H1 (cell line): ENCODE measurements at regions of chr12 and their contacts with region 1.

Region 1: GRCh38 chr12:107992870-107993451 is 136.1 kb upstream of the WSCD2 start:
- DNase-seq: peak; percentile 36 to 60
- H3K4me3 ChIP-seq: no peak overlapping the region
- H3K27ac ChIP-seq: no peak overlapping the region
- H3K4me1 ChIP-seq: no peaks in the 10 kb centered on the region
- H3K27me3 ChIP-seq: no peaks in the 10 kb centered on the region; a peak in 1 of 7 replicates
- CTCF ChIP-seq: peak; percentile 26 to 86 (median 82)
- EP300 ChIP-seq: no peak
- POLR2A ChIP-seq: no peak
- RAD21 ChIP-seq: peak; percentile 71 to 72

Region 2: GRCh38 chr12:107929436-107929835 is 63.5 kb before region 1 on chr12:
- CTCF ChIA-PET with region 1: interaction called, 24 read pairs
- POLR2A ChIA-PET with region 1: no interaction called
- DNase-seq: no peak
- H3K4me3 ChIP-seq: no peak overlapping the region
- H3K27ac ChIP-seq: no peak overlapping the region
- H3K4me1 ChIP-seq: no peaks in the 10 kb centered on the region
- H3K27me3 ChIP-seq: no peaks in the 10 kb centered on the region
- CTCF ChIP-seq: peak in 2 of 3 experiments; percentile 54 to 67; a peak in 3 of 4 replicates
- EP300 ChIP-seq: no peak
- POLR2A ChIP-seq: no peak
- RAD21 ChIP-seq: peak; percentile 67 to 80

Region 3: GRCh38 chr12:108004319-108004718 is 11.4 kb after region 1 on chr12:
- CTCF ChIA-PET with region 1: interaction called, 56 read pairs
- POLR2A ChIA-PET with region 1: no interaction called
- DNase-seq: no peak
- H3K4me3 ChIP-seq: no peak overlapping the region
- H3K27ac ChIP-seq: no peak overlapping the region
- H3K4me1 ChIP-seq: peaks cover 0 to 3% (median 0%) of the 10 kb centered on the region in 4 experiments; a peak in 1 of 7 replicates
- H3K27me3 ChIP-seq: peaks cover 0 to 2% (median 0%) of the 10 kb centered on the region in 4 experiments; a peak in 2 of 7 replicates
- CTCF ChIP-seq: no peak
- EP300 ChIP-seq: no peak
- POLR2A ChIP-seq: no peak
- RAD21 ChIP-seq: no peak

Region 4: DNA sequence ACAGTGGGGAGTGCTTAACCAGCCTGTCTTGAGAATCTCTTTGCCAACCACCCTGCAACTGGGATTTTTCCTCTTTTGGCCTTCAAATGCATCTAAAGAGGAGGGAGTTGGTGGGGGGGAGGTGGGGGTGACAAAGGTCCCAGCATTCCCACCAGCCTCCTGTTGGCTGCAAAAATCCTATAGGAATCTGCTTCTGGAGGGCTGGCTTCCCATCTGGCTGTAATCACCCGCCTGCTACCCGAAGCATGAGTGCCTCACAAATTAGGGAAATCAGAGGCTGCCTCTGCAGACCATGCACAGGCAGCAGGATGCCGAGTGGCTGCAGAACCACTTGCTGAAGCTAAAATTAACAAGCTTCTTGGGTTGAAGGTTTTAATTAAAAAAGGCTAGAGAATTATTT is 62.2 kb after region 1 on chr12:
- CTCF ChIA-PET with region 1: interaction called, 37 read pairs
- POLR2A ChIA-PET with region 1: no interaction called
- DNase-seq: no peak
- H3K4me3 ChIP-seq: no peak overlapping the region
- H3K27ac ChIP-seq: no peak overlapping the region
- H3K4me1 ChIP-seq: peaks cover 0 to 5% (median 2%) of the 10 kb centered on the region in 4 experiments; a peak in 3 of 7 replicates
- H3K27me3 ChIP-seq: no peaks in the 10 kb centered on the region; a peak in 1 of 7 replicates
- CTCF ChIP-seq: no peak
- EP300 ChIP-seq: no peak
- POLR2A ChIP-seq: no peak
- RAD21 ChIP-seq: no peak

Region 5: DNA sequence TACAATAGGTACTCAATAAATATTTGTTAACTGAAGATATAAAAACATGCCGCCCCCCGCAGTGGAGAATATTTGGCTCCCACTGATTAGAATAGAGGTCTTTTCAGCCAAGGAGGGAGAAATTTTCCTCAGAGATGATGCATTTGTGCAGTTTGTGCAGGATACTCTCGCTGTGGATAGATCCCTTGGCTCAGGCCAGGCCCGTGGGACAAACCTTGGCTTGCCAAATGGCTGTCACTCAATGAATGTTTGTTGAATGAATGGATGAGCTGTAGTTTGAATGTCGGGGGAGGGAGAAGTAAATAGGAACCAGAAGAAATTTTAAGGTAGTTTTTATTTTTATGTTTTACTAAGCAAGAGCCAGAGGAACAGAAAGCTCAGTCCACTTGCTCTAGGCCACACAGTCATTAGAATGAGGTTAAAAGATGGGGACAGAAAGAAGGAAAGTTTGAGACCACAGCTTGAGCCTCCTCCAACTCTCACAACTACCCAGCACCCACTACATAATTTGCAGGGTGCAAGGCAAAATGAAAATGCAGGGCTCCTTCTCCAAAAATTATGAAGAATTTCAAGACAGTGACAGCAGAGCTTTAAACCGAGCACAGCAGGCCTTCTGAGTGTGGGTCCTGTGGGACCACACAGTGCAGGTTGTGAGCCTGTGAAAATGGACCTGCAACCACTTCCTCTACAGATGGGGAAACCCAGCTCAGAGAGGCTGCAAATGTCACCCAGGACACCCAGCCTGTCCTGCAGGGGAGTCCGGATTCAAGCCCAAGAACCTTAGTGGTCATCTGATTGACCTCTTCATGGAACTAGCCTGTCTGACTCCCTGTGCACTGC is 187.5 kb after region 1 on chr12:
- CTCF ChIA-PET with region 1: interaction called, 10 read pairs
- POLR2A ChIA-PET with region 1: no interaction called
- DNase-seq: no peak
- H3K4me3 ChIP-seq: no peak overlapping the region
- H3K27ac ChIP-seq: no peak overlapping the region; the same call in 1 of the 2 replicates
- H3K4me1 ChIP-seq: peaks cover 0 to 4% (median under 1%) of the 10 kb centered on the region in 4 experiments; a peak in 3 of 7 replicates
- H3K27me3 ChIP-seq: no peaks in the 10 kb centered on the region
- CTCF ChIP-seq: no peak
- EP300 ChIP-seq: no peak
- POLR2A ChIP-seq: no peak
- RAD21 ChIP-seq: no peak

Region 6: GRCh38 chr12:108507971-108508642 is 515.1 kb after region 1 on chr12:
- CTCF ChIA-PET with region 1: interaction called, 41 read pairs
- POLR2A ChIA-PET with region 1: no interaction called
- DNase-seq: no peak
- H3K4me3 ChIP-seq: no peak overlapping the region
- H3K27ac ChIP-seq: no peak overlapping the region
- H3K4me1 ChIP-seq: 0 out of 7 replicates have a peak, but pooled peaks cover 0 to 3% (median 0%) of the 10 kb centered on the region in 4 experiments
- H3K27me3 ChIP-seq: no peaks in the 10 kb centered on the region
- CTCF ChIP-seq: no peak
- EP300 ChIP-seq: no peak
- POLR2A ChIP-seq: no peak
- RAD21 ChIP-seq: no peak